Activated CD4-positive, alpha-beta T cell treated with anti-CD3 and anti-CD28 coated beads, Interleukin-2, amount 10 ng/mL, durations not matched to agents 24 days and 14 days (primary cell): ENCODE measurements at regions of chr15 and their contacts with region 1.

Region 1: GRCh38 chr15:38563723-38564519 is 693 bp downstream of the RASGRP1 start:
- DNase-seq: peak; percentile 97
- H3K4me3 Mint-ChIP-seq: peak overlapping the region; percentile 95
- H3K27ac Mint-ChIP-seq: peak overlapping the region; percentile 99
- H3K4me1 Mint-ChIP-seq: peaks cover 61% of the 10 kb centered on the region
- H3K27me3 Mint-ChIP-seq: no peaks in the 10 kb centered on the region

Region 2: GRCh38 chr15:38474155-38474757 is 89.7 kb before region 1 on chr15:
- intact Hi-C with region 1: loop called (anchors 5 kb)
- DNase-seq: peak; percentile 85
- H3K4me3 Mint-ChIP-seq: no peak overlapping the region
- H3K27ac Mint-ChIP-seq: no peak overlapping the region
- H3K4me1 Mint-ChIP-seq: peaks cover 13% of the 10 kb centered on the region
- H3K27me3 Mint-ChIP-seq: no peaks in the 10 kb centered on the region

Region 3: DNA sequence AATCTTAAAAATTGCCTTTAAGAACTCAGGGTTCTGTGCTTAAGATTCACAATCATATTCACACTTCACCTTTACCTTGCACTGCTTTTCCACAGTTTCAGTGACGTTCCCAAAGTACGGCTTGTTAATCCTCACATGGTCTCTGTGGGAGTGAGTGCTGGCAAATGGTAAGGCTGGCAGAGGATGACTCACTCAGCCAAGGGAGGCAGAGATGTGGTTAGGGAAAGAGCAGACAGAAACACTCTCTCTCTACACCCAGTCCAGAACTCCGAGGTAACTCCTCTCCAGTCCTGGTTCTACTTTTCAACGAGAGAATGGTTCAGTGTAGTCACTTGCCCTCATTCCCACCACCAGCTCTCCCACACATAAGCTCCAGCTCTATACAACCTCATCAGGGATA is 32.4 kb before region 1 on chr15:
- intact Hi-C with region 1: loop called (anchors 5 kb)
- DNase-seq: no peak
- H3K4me3 Mint-ChIP-seq: peak overlapping the region; percentile 1
- H3K27ac Mint-ChIP-seq: peak overlapping the region; percentile 65
- H3K4me1 Mint-ChIP-seq: peaks cover 80% of the 10 kb centered on the region
- H3K27me3 Mint-ChIP-seq: no peaks in the 10 kb centered on the region

Region 4: DNA sequence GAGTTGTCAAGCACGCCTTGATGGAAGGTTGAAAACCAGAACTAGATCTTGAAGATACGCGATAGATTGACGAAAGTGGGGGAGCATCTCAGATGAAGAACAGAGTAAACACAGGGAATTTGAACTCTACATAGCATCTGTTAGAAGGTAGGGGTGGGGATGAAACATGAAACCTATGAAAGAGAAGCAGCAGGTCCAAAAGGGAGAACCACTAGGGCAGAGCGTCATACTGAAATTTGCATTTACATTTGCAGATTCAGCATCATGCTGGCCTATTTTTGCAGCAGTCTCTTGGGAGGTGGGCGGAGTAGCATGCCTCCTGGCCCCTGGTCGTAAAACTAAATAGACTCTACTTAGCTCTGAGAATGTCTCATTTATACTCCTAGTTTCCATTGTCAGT is 46.8 kb after region 1 on chr15:
- intact Hi-C with region 1: loop called (anchors 1 kb)
- DNase-seq: peak; percentile 79
- H3K4me3 Mint-ChIP-seq: peak overlapping the region; percentile 79
- H3K27ac Mint-ChIP-seq: peak overlapping the region; percentile 96
- H3K4me1 Mint-ChIP-seq: peaks cover 79% of the 10 kb centered on the region
- H3K27me3 Mint-ChIP-seq: no peaks in the 10 kb centered on the region

Region 5: GRCh38 chr15:38651328-38652038 is 87.6 kb after region 1 on chr15:
- intact Hi-C with region 1: loop called (anchors 1 kb)
- DNase-seq: peak; percentile 89
- H3K4me3 Mint-ChIP-seq: peak overlapping the region; percentile 82
- H3K27ac Mint-ChIP-seq: peak overlapping the region; percentile 90
- H3K4me1 Mint-ChIP-seq: peaks cover 76% of the 10 kb centered on the region
- H3K27me3 Mint-ChIP-seq: no peaks in the 10 kb centered on the region

Region 6: GRCh38 chr15:38683382-38684242 is 119.7 kb after region 1 on chr15:
- intact Hi-C with region 1: loop called (anchors 1 kb)
- DNase-seq: peak; percentile 91
- H3K4me3 Mint-ChIP-seq: peak overlapping the region; percentile 55
- H3K27ac Mint-ChIP-seq: peak overlapping the region; percentile 97
- H3K4me1 Mint-ChIP-seq: peaks cover 73% of the 10 kb centered on the region
- H3K27me3 Mint-ChIP-seq: no peaks in the 10 kb centered on the region